ENCODE measurements at regions of chr12 and their contacts with region 1.

Region 1: GRCh38 chr12:4857472-4858291 is 52.0 kb upstream of the KCNA1 start:
- DNase-seq: peak; percentile 50 to 92
- H3K4me3 ChIP-seq: peak overlapping the region in 2 of 4 experiments; percentile 34 to 45; a peak in 5 of 8 replicates
- H3K27ac ChIP-seq: no peak overlapping the region
- H3K4me1 ChIP-seq: peaks cover 2 to 14% (median 6%) of the 10 kb centered on the region in 4 experiments; a peak in 6 of 7 replicates
- H3K27me3 ChIP-seq: peaks cover 0 to 13% (median 6%) of the 10 kb centered on the region in 4 experiments; a peak in 4 of 7 replicates
- CTCF ChIP-seq: peak; percentile 76 to 94 (median 91)
- EP300 ChIP-seq: 0 out of 3 replicates have a peak, but pooled peaks of 1 of the 2 experiments have one; percentile 17
- POLR2A ChIP-seq: no peak
- RAD21 ChIP-seq: peak; percentile 79 to 80

Region 2: DNA sequence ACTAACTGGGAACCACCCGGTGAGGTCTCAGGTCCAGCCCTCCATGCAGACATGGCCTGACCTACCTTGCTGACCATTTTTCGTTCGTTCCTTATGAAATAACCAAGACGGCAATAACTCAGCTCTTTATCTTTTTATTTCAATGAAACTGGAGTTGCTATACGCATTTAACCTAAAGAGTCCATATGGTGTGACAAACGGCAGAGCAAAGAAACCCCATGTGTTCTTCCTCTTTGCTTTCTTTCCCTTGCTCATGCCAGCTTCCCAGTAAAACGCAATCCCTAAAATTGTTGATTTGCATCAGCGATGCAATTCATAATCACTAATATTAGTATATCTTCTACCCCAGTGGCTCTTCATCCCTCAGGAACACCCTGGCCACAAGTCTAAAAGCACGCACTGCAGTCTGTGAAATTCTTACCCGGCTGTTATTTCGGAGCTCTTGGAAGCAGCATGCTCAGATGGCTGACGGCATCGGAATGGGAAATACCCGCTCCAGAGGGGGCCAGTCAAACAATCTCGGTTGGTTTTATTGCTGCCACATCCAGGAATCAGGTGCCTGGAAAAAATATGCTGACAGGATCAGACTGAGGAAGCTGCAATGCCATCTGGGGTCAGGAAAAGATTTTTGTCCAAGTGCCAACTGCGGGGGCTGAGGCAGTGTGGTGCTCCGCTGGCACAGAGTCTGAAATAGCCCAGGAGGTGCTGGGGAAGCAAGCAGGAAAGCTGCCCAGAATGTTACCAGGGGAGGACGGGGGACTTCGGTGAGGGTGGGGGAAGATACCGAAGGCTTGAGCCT is 23.8 kb after region 1 on chr12:
- CTCF ChIA-PET with region 1: interaction called, 13 read pairs
- POLR2A ChIA-PET with region 1: no interaction called
- DNase-seq: no peak
- H3K4me3 ChIP-seq: no peak overlapping the region
- H3K27ac ChIP-seq: no peak overlapping the region
- H3K4me1 ChIP-seq: no peaks in the 10 kb centered on the region
- H3K27me3 ChIP-seq: no peaks in the 10 kb centered on the region
- CTCF ChIP-seq: no peak
- EP300 ChIP-seq: no peak
- POLR2A ChIP-seq: no peak
- RAD21 ChIP-seq: no peak

Region 3: DNA sequence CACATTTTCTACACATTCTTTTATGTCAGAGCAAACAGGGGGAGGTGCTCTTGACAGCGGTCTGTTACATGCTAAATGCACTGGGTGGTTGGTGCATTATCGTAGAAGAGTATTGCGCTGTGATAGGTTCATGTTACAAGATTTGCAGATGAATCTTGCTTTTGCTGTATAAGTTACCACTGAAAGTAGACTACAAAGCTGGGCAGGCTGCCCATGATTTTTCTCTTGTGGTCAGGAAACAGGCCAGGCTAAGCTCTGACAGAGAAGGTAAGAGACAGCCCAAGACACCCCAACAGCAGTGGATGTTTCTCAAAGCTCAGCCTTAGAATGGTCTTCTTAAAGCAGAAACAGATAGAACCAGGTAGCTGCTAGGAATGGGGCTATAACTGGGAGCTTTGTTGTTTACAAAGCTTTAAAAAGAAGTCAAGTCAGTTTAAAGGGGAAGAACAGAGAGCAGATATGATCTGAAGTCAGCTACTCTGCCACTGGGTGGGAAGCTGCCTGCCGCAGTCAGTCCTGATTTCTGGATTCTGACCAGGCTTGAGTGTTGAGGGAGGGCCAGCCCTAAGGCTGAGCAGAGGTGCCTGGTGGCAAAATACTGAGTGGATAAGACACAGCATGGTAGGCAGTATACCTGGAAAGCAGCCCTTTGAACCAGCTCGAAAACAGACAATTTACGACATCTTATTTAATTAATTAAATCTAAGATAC is 61.4 kb after region 1 on chr12:
- CTCF ChIA-PET with region 1: interaction called, 162 read pairs
- POLR2A ChIA-PET with region 1: no interaction called
- DNase-seq: no peak
- H3K4me3 ChIP-seq: no peak overlapping the region
- H3K27ac ChIP-seq: no peak overlapping the region
- H3K4me1 ChIP-seq: no peaks in the 10 kb centered on the region
- H3K27me3 ChIP-seq: peaks cover 0 to 1% (median 0%) of the 10 kb centered on the region in 4 experiments; a peak in 2 of 7 replicates
- CTCF ChIP-seq: no peak
- EP300 ChIP-seq: no peak
- POLR2A ChIP-seq: no peak
- RAD21 ChIP-seq: no peak

Region 4: GRCh38 chr12:4951601-4952000 is 93.9 kb after region 1 on chr12:
- CTCF ChIA-PET with region 1: interaction called, 17 read pairs
- POLR2A ChIA-PET with region 1: no interaction called
- DNase-seq: no peak
- H3K4me3 ChIP-seq: no peak overlapping the region
- H3K27ac ChIP-seq: no peak overlapping the region
- H3K4me1 ChIP-seq: no peaks in the 10 kb centered on the region; a peak in 2 of 7 replicates
- H3K27me3 ChIP-seq: peaks cover 2 to 27% (median 14%) of the 10 kb centered on the region in 4 experiments; a peak in 5 of 7 replicates
- CTCF ChIP-seq: no peak
- EP300 ChIP-seq: no peak
- POLR2A ChIP-seq: no peak
- RAD21 ChIP-seq: no peak

Region 5: DNA sequence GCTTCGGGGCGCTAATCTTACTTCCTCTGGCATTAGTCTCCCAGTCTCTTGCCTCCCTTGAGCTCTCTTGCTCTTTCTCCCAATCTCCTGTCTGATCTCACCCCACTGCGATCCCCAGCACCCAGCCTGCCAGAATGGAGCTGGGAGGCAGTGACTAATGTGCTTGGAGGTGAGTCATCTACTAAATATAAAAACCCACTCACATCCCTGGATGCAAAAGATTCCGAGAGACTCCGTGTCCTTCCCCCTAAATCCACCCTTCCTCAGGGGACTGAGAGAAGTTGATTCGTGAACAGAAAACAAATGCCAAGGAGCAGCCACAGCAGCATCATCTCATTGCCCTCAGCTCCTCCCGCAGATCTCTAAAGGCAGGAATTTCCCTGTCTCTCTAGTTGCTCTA is 140.3 kb after region 1 on chr12:
- CTCF ChIA-PET with region 1: interaction called, 97 read pairs
- POLR2A ChIA-PET with region 1: no interaction called
- DNase-seq: no peak
- H3K4me3 ChIP-seq: no peak overlapping the region
- H3K27ac ChIP-seq: no peak overlapping the region
- H3K4me1 ChIP-seq: peaks cover 0 to 7% (median 0%) of the 10 kb centered on the region in 4 experiments; a peak in 1 of 7 replicates
- H3K27me3 ChIP-seq: no peaks in the 10 kb centered on the region; a peak in 1 of 7 replicates
- CTCF ChIP-seq: no peak
- EP300 ChIP-seq: no peak
- POLR2A ChIP-seq: no peak
- RAD21 ChIP-seq: no peak

Region 6: GRCh38 chr12:5022465-5023061 is 164.9 kb after region 1 on chr12:
- CTCF ChIA-PET with region 1: interaction called, 19 read pairs
- POLR2A ChIA-PET with region 1: no interaction called
- DNase-seq: peak; percentile 57 to 69
- H3K4me3 ChIP-seq: no peak overlapping the region
- H3K27ac ChIP-seq: no peak overlapping the region
- H3K4me1 ChIP-seq: peaks cover 0 to 6% (median 2%) of the 10 kb centered on the region in 4 experiments; a peak in 4 of 7 replicates
- H3K27me3 ChIP-seq: no peaks in the 10 kb centered on the region; a peak in 1 of 7 replicates
- CTCF ChIP-seq: peak; percentile 91 to 98 (median 97)
- EP300 ChIP-seq: no peak
- POLR2A ChIP-seq: no peak
- RAD21 ChIP-seq: peak; percentile 96 to 98

Measured in H1 (cell line).